Calu3 (cell line): ENCODE measurements at regions of chr5 and their contacts with region 1.

Region 1: DNA sequence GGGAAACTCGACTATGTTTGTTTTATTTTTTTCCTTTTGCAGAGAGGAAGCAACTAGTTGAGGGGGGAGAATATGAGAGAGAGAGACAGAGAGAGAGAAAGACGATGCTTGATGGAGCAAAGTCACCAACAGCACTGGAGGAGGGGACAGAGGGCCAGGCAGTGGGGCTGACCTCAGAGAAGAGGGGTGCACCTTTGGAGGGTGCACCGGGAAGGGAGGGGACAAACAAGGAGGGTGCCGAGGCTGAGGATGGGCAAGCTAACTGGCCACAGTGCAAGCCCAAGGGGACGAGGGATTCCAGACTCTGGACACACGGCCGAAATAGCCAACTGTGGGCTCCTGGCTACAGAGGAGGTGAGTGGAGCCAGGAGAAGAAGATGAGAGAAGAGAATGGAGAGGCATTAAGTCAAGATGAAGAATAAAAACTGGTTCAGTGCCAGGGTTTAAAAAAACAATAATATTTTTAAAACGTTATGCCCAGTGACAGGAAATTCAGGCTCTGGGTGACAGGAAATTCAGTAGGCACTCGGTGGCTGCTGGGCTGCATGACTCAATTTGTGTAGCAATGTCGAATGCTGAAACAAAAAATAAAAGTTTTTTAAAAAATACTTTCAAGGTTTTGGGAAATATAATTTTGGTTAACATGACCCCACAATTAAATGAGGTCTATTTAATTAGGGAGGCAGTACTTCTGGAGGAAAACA is 13.3 kb upstream of the GLRX start:
- DNase-seq: no peak
- H3K4me3 Mint-ChIP-seq: peak overlapping the region; percentile 55
- H3K27ac Mint-ChIP-seq: peak overlapping the region; percentile 57
- H3K4me1 Mint-ChIP-seq: peaks cover 64% of the 10 kb centered on the region
- H3K27me3 Mint-ChIP-seq: no peaks in the 10 kb centered on the region
- CTCF ChIP-seq: no peak

Region 2: DNA sequence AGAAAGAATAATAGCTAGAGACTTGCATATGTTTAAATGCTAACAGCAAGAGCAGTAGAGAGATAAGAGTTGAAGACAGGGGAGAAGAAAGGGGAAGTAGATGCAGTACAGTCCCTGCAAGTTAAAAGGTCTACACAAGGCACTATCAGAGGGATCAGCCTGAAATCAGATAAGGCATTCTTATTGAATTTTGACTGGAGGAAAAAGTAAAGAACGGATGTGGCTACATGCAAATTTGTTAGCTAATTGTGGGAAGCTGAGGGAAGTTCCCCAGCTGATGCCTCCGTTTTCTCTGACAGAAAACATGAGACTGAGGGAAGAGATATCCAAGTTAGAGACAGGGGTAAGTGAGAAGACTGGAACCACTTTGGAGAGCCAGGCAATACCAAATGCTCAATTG is 117.6 kb before region 1 on chr5:
- CTCF ChIA-PET with region 1: no interaction called
- intact Hi-C with region 1: no loop called
- DNase-seq: no peak
- H3K4me3 Mint-ChIP-seq: no peak overlapping the region
- H3K27ac Mint-ChIP-seq: no peak overlapping the region
- H3K4me1 Mint-ChIP-seq: peaks cover 10% of the 10 kb centered on the region
- H3K27me3 Mint-ChIP-seq: no peaks in the 10 kb centered on the region
- CTCF ChIP-seq: no peak

Region 3: DNA sequence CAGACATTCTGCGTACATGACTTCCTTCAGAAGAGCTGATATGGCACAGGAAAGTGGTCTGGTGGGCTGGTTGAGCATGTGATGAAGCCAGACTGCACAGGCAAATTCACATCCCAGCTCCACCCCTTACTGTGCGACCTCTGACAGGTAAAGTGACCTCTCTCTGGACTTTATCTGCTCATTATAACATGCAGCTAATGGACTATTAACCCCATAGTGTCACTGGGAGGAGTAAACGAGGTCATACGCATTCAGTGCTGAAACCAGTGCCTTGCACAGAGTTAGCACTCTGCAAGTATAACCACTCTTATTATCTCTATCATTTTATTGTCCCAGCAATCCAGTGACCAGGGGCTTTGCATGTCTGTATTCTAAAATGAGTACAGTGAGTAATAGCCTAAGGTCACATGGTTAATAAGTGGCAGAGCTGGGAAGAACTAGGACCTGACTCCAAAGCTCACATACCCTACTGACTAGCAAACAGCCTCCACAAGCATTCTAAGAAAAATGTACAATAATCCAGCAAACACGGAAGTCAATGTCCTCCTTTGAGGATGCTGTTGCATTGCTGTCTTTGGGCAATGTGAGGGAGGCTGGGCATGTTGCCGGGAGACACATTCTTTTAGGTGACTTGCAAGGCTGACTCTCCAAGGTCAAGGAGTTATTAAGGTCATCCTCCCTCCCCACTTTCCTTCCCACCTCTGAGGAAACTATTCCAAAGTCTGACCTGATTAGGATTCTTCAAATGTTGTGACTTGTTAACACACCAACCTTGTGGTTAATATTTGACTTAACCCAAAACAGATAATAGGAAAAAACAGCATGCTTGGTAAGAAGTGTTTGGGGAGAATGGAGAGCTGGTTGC is 32.3 kb before region 1 on chr5:
- CTCF ChIA-PET with region 1: no interaction called
- intact Hi-C with region 1: loop called (anchors 5 kb)
- DNase-seq: peak; percentile 32
- H3K4me3 Mint-ChIP-seq: no peak overlapping the region
- H3K27ac Mint-ChIP-seq: peak overlapping the region; percentile 32
- H3K4me1 Mint-ChIP-seq: peaks cover 51% of the 10 kb centered on the region
- H3K27me3 Mint-ChIP-seq: no peaks in the 10 kb centered on the region
- CTCF ChIP-seq: no peak

Region 4: DNA sequence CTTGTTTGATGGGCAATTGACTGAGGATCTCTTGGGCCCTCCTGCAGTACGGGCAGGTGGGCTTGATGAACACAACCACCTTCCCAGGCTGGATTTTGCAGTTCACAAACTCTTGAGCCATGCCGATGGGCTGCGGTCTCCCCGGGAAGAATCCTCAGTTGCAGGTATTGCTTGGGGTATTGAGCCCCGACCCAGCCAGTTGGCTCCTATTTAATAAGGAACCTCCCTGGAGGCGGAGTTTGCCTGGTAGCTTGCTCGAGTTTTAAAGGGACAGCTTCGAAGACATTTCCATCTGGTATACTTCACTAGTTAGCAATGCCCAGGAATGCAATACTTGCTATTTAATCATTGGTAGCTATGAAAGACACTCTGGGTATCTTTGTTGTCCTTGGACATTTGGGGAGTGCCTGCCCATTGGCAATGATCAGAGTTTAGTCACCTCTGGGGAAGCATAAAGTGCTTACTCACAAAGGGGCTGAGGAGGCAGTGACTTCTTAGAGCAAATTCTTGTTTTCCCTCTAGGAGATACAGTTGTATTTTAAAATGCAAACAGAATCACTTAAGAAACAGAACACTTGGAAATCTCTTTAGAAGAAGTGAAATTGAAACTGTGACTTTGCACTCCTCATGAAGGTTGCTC is 13.2 kb before region 1 on chr5 and contains the start of gene GLRX:
- CTCF ChIA-PET with region 1: interaction called, 18 read pairs
- intact Hi-C with region 1: no loop called
- DNase-seq: peak; percentile 73
- H3K4me3 Mint-ChIP-seq: peak within 1 kb of the TSS; percentile 86
- H3K27ac Mint-ChIP-seq: peak within 1 kb of the TSS; percentile 71
- H3K4me1 Mint-ChIP-seq: peaks cover 39% of the 10 kb centered on the region
- H3K27me3 Mint-ChIP-seq: no peaks in the 10 kb centered on the region
- CTCF ChIP-seq: no peak
- total RNA-seq, gene GLRX: 27.9 and 33.7 TPM in 2 replicates